Activated T-helper 1 cell treated with anti-CD3 and anti-CD28 coated beads, Interleukin-12 subunit alpha, Interleukin-12 subunit beta, Interleukin-2, Interleukin-4 antibody, amounts not matched to agents 30 ng/mL and 10 ng/mL and 1 ng/mL, durations not matched to agents 14 hours and 24 hours and 36 hours (primary cell): ENCODE measurements at regions of chr5 and their contacts with region 1.

Region 1: DNA sequence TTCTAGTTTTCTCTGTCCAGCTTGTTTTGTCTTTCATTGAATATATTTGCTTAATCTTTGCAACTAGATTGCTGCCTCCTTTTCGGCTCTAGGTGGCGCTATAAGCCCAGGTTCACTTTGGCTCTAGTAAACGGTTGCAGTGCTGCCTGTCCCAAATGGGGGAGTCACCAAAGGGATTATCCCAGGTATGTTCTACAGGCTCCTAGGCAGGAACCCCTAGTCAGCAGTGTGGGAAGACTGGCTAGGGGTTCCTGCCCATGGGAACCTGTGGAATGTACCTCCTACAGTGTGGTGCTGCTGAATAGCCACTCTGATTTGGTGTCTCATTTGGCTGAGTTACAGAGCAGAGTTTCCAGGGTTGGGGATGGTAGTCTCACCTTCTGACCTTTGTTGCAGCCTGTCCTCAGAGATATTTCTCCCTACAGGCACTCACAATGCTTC is 85.2 kb downstream of the ARSB start:
- DNase-seq: no peak
- H3K4me3 Mint-ChIP-seq: no peak overlapping the region
- H3K27ac Mint-ChIP-seq: no peak overlapping the region
- H3K4me1 Mint-ChIP-seq: no peaks in the 10 kb centered on the region
- H3K27me3 Mint-ChIP-seq: no peaks in the 10 kb centered on the region

Region 2: GRCh38 chr5:78610163-78610583 is 289.8 kb before region 1 on chr5:
- intact Hi-C with region 1: no loop called
- DNase-seq: no peak
- H3K4me3 Mint-ChIP-seq: no peak overlapping the region
- H3K27ac Mint-ChIP-seq: no peak overlapping the region
- H3K4me1 Mint-ChIP-seq: no peaks in the 10 kb centered on the region
- H3K27me3 Mint-ChIP-seq: peaks cover 12% of the 10 kb centered on the region

Region 3: DNA sequence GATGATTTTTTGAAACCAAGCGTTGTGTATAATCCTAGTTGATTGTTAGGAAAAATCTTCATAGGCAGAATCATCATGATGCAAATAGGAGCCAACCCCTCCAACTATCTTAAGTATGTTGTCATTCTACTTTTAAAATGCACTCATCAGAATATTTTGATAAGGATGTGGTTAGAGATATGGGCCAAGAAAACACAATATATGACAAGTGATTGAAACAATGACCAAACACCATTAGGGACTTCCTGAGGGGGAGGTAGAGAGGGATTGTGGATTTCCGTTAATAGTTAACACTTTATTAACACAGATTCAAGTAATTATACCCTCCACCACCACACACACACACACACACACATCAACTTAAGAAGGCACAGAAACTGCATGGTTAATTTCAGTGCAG is 58.2 kb before region 1 on chr5:
- intact Hi-C with region 1: no loop called
- DNase-seq: no peak
- H3K4me3 Mint-ChIP-seq: no peak overlapping the region
- H3K27ac Mint-ChIP-seq: no peak overlapping the region
- H3K4me1 Mint-ChIP-seq: no peaks in the 10 kb centered on the region
- H3K27me3 Mint-ChIP-seq: peaks cover 6% of the 10 kb centered on the region

Region 4: DNA sequence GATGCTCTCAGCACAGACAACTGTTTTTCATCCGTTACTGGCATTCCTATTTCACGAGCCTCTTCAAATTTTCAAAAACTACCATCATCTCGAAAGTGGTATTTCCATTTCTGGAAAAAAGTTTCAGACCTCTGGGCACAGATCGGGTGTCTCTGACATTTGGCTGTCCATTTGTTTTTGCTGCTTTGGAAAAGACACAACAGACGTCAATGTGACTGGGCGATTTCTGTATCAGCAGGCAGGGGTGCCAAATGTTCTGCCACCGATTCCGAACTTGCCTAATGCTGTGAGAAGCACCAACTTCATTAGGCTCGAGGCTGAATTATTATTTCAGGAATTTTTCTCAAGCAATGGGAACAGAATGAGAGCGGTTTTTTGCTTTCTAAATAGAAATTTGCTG is 20.4 kb before region 1 on chr5:
- intact Hi-C with region 1: no loop called
- DNase-seq: no peak
- H3K4me3 Mint-ChIP-seq: no peak overlapping the region
- H3K27ac Mint-ChIP-seq: no peak overlapping the region
- H3K4me1 Mint-ChIP-seq: no peaks in the 10 kb centered on the region
- H3K27me3 Mint-ChIP-seq: no peaks in the 10 kb centered on the region

Region 5: GRCh38 chr5:78953092-78953800 is 53.3 kb after region 1 on chr5:
- intact Hi-C with region 1: loop called (anchors 5 kb)
- DNase-seq: no peak
- H3K4me3 Mint-ChIP-seq: no peak overlapping the region
- H3K27ac Mint-ChIP-seq: peak overlapping the region; percentile 59
- H3K4me1 Mint-ChIP-seq: peaks cover 21% of the 10 kb centered on the region
- H3K27me3 Mint-ChIP-seq: no peaks in the 10 kb centered on the region

Region 6: GRCh38 chr5:78964887-78965286 is 64.9 kb after region 1 on chr5:
- intact Hi-C with region 1: loop called (anchors 1 kb)
- DNase-seq: no peak
- H3K4me3 Mint-ChIP-seq: no peak overlapping the region
- H3K27ac Mint-ChIP-seq: no peak overlapping the region
- H3K4me1 Mint-ChIP-seq: no peaks in the 10 kb centered on the region
- H3K27me3 Mint-ChIP-seq: no peaks in the 10 kb centered on the region

Region 7: GRCh38 chr5:79011219-79011836 is 111.4 kb after region 1 on chr5:
- intact Hi-C with region 1: no loop called
- DNase-seq: no peak
- H3K4me3 Mint-ChIP-seq: no peak overlapping the region
- H3K27ac Mint-ChIP-seq: no peak overlapping the region
- H3K4me1 Mint-ChIP-seq: no peaks in the 10 kb centered on the region
- H3K27me3 Mint-ChIP-seq: peaks cover 22% of the 10 kb centered on the region

Region 8: DNA sequence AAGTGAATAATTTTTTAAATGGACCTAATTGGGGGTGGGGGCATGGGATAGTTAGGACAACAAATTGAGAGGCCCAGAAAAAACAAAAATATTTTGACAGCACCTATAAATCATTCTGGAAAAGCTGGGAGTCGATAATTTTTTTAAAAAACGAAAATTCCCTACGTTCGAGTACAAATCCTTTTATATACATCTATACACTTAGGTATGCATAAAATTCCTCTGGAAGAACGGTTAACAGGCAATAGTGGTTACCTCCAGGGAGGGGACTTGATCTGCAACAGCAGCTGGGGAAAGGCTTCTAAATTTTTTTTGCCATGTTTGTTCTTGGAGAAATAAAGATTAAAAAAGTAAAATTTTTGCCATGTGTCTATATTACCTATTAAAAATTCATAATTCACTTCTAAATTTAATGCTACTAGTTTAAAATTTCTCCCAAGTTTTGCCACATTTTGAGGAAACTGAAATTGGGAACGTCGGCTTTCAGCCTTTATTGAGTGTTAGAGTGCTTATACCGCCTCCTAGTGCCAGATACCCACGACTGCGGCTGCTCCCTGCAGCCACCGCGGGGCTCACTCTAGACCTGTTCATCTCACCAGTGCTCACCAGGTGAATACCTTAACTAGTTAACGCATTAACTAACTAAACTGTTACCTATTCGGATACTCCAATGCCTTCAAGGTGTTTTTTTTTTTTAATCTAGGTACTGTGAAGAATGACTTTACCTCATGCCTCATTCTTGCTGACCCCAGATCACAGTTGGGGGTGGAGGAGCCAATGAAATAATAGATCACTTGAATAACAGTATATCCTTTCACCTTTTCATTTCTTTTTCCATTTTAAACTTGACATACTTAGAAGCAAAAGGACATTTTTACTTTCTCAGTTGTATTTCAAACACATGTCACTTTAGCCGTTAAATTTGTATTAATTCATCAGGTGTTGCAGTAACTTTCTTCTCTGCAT is 209.9 kb after region 1 on chr5:
- intact Hi-C with region 1: loop called (anchors 1 kb)
- DNase-seq: no peak
- H3K4me3 Mint-ChIP-seq: no peak overlapping the region
- H3K27ac Mint-ChIP-seq: no peak overlapping the region
- H3K4me1 Mint-ChIP-seq: no peaks in the 10 kb centered on the region
- H3K27me3 Mint-ChIP-seq: peaks cover 62% of the 10 kb centered on the region